Left cardiac atrium (tissue), 4 donors: ENCODE measurements at regions of chr11 and their contacts with region 1.

Region 1: GRCh38 chr11:29432719-29433325 is 584.0 kb downstream of the KCNA4 start:
- DNase-seq: no peak
- ATAC-seq: no peak

Region 2: DNA sequence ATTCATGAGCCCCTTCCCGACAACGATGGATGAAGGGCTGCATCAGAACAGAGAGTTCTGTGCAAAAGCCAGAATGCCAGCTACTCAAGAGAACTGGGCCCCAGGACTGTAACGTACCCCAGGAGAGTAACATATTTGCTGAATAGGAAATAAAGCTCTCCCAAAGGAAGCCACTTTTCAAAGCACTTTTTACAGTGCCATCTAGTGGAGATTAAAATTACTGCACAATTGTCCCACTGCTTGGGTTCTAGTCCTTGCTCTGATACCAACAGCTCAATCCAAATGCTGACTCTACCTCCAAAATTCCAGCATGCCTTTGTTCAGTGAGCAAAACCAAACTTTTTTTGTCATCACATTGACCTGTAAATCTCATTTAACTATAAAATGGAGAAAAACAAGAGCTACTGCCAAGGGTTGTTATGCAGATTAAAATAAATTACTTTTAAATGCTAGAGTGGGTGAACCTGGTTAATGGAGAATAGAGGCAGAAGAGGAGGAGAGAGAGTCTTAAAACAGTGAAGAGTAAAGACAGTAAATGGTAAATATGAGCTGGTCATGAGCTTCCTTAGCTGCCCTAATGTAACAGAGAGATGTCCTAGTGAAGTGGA is 710.4 kb after region 1 on chr11:
- intact Hi-C with region 1: loop called in 1 of 2 experiments (anchors 10 kb)
- DNase-seq: no peak
- ATAC-seq: peak in 1 of 2 donors; percentile 29

Region 3: GRCh38 chr11:30314625-30315024 is 881.8 kb after region 1 on chr11:
- intact Hi-C with region 1: loop called in 1 of 2 experiments (anchors 10 kb)
- DNase-seq: no peak
- ATAC-seq: no peak